Panc1 (cell line): ENCODE measurements at regions of chr5 and their contacts with region 1.

Region 1: DNA sequence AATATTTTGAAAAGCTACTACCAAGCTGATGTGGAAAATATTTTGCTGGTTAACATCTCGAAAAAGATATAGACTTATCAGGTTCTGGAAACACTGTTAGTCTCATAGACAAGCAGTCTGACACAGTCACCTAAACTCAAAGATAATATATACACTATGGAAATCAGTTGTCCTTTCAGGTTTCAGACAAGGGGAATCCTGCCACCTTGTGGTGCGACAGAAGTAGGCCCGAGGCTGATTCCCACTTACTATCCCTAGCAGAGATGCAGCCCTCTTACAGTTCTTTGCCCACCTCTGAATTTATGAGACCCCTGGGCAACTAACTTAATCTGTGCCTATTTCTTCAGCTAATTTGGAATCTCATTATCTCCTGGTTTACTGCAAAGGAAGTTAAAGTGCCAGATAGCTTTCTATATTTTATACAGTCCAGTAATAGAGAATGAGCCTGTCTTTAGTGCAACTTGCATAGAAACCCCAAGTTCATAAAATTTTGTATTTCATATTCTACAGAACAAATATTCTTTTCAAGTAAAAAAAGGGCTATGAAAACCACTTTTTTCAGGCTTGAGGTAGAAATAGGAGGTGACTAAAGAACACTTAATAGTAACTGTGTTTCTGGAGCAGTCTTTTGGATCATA is 16.9 kb downstream of the RAD1 start:
- DNase-seq: peak; percentile 55
- ATAC-seq: peak; percentile 94
- H3K4me3 ChIP-seq: no peak overlapping the region
- H3K27ac ChIP-seq: no peak overlapping the region
- H3K4me1 ChIP-seq: no peaks in the 10 kb centered on the region
- H3K27me3 ChIP-seq: no peaks in the 10 kb centered on the region
- CTCF ChIP-seq: peak; percentile 87

Region 2: GRCh38 chr5:34486160-34486848 is 412.1 kb before region 1 on chr5:
- CTCF ChIA-PET with region 1: interaction called, 6 read pairs
- POLR2A ChIA-PET with region 1: no interaction called
- in situ Hi-C with region 1: no loop called
- intact Hi-C with region 1: loop called (anchors 1 kb)
- DNase-seq: peak; percentile 78
- ATAC-seq: peak; percentile 86
- H3K4me3 ChIP-seq: no peak overlapping the region
- H3K27ac ChIP-seq: no peak overlapping the region
- H3K4me1 ChIP-seq: no peaks in the 10 kb centered on the region
- H3K27me3 ChIP-seq: no peaks in the 10 kb centered on the region
- CTCF ChIP-seq: peak; percentile 90

Region 3: GRCh38 chr5:34522599-34523386 is 375.6 kb before region 1 on chr5:
- CTCF ChIA-PET with region 1: interaction called, 3 read pairs
- POLR2A ChIA-PET with region 1: no interaction called
- in situ Hi-C with region 1: no loop called
- intact Hi-C with region 1: loop called (anchors 1 kb)
- DNase-seq: peak; percentile 77
- ATAC-seq: peak; percentile 96
- H3K4me3 ChIP-seq: no peak overlapping the region
- H3K27ac ChIP-seq: no peak overlapping the region
- H3K4me1 ChIP-seq: no peaks in the 10 kb centered on the region
- H3K27me3 ChIP-seq: no peaks in the 10 kb centered on the region
- CTCF ChIP-seq: peak; percentile 82

Region 4: GRCh38 chr5:34656001-34656699 is 242.2 kb before region 1 on chr5 and contains the start of gene RAI14:
- CTCF ChIA-PET with region 1: no interaction called
- POLR2A ChIA-PET with region 1: no interaction called
- in situ Hi-C with region 1: no loop called
- intact Hi-C with region 1: loop called (anchors 10 kb)
- DNase-seq: no peak
- ATAC-seq: peak; percentile 85
- H3K4me3 ChIP-seq: peak within 1 kb of the TSS; percentile 56 to 76
- H3K27ac ChIP-seq: no peak within 1 kb of the TSS
- H3K4me1 ChIP-seq: peaks cover 8% of the 10 kb centered on the region; the same call in 1 of the 2 replicates
- H3K27me3 ChIP-seq: peaks cover 24% of the 10 kb centered on the region
- CTCF ChIP-seq: peak; percentile 40
- total RNA-seq, gene RAI14: 18.5 TPM

Region 5: DNA sequence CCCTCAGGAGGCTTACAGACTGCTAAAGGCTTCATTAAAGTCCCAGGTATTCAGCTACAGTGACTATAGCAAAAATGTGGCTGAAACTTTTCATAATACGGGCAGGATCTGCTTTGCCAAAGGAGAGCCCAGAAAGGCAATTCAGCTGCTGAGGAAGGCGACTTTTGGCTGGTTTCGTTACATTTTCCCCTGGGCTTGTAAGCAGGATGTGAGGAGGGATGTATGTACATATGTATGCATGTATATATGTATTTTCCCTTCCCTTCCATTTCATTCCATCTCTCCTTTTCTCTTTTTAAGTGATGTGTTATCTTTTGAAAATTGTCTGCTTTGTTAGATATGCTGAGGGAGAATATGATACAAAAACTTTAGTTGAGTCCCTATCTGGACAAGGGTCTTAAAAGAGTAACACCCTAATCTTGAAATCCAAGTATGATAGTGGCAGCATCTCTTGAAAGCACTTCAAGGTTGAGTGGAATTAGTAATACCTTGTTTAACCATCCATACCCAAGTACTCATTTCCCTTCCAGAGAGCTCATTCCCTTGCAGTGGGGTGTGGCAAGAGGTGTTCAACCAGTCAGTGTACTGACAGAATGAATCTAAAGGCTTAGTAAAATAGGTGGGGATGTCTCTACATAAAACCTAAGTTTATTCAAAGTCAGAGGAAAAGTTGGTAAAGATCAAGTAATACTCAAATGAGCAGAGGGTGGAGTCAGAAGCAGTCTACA is 11.8 kb before region 1 on chr5:
- CTCF ChIA-PET with region 1: no interaction called
- POLR2A ChIA-PET with region 1: no interaction called
- in situ Hi-C with region 1: no loop called
- intact Hi-C with region 1: no loop called
- DNase-seq: no peak
- ATAC-seq: no peak
- H3K4me3 ChIP-seq: no peak overlapping the region
- H3K27ac ChIP-seq: no peak overlapping the region
- H3K4me1 ChIP-seq: no peaks in the 10 kb centered on the region
- H3K27me3 ChIP-seq: peaks cover 16% of the 10 kb centered on the region
- CTCF ChIP-seq: no peak